MCF 10A (cell line): ENCODE measurements at regions of chrX and their contacts with region 1.

Region 1: DNA sequence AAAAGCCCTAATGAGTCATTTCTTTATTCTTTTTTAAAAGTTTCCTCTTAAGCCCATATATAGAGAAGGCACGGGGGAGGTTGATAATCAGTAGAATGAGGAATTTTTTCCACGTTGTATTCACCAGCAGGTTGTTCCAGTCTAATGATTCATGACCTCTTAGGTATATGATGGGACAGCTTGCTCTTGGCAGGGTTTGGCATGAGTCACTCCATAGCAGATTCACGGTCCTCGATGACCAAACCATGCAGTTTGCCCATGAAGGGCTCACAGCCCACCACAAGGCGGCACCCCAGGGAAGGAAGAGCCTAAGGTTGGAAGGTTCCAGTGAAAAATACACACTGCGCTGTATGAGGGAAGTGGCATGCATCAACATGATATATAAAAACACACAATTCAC is 623.8 kb upstream of the DIPK2B start:
- DNase-seq: peak; percentile 95
- H3K4me3 Mint-ChIP-seq: no peak overlapping the region
- H3K27ac Mint-ChIP-seq: peak overlapping the region; percentile 55
- H3K4me1 Mint-ChIP-seq: peaks cover 13% of the 10 kb centered on the region
- H3K27me3 Mint-ChIP-seq: peaks cover 8% of the 10 kb centered on the region
- CTCF ChIP-seq: peak; percentile 65

Region 2: DNA sequence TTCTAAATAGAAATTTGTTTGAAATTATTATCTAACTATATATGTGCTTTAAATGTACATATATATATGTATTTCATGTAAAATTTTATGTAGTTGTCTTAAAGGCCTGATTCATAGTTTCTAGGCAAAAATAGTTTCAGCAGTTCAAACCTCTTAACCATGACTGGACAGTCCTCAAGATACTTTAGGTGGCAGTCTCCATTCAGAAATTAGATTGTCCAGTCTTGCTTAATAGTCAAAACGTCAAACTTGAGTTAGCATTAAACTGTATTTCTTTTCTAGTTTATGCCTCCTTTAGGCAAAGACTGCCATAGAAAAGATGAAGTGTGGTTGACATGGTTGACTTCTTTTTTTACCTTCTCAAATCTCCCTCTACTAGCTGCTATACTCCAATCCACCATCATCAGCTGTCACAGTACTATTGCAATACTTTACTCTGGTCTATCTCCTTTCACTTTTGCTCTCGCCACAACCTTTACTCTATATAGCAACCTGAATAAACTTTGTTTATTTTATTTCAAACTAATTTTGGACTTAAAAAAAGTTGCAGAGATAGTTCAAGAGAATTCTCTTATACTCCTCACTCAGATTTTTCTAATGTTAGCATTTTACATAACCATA is 228.2 kb before region 1 on chrX:
- CTCF ChIA-PET with region 1: no interaction called
- POLR2A ChIA-PET with region 1: no interaction called
- intact Hi-C with region 1: loop called (anchors 10 kb)
- DNase-seq: peak; percentile 9
- H3K4me3 Mint-ChIP-seq: no peak overlapping the region
- H3K27ac Mint-ChIP-seq: no peak overlapping the region
- H3K4me1 Mint-ChIP-seq: no peaks in the 10 kb centered on the region
- H3K27me3 Mint-ChIP-seq: peaks cover 76% of the 10 kb centered on the region
- CTCF ChIP-seq: no peak

Region 3: DNA sequence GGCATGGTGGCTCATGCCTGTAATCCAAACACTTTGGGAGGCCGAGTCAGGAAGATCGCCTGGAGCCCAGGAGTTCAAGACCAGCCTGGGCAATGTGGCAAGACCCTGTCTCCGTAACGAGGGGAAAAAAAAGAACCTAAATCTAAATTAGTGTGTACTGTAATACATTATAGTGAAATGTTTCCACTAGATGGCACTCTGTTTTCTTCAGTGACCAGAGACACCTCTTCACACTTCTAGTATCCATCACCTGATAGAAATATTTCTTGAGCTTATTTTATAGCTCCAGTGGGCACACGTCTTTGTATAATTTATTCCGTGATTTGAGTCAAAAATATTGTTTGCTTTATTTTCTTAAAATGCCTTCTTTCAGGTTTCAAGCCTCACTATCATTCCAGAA is 22.9 kb before region 1 on chrX:
- CTCF ChIA-PET with region 1: interaction called, 10 read pairs
- POLR2A ChIA-PET with region 1: interaction called, 16 read pairs
- intact Hi-C with region 1: loop called (anchors 1 kb)
- DNase-seq: peak; percentile 66
- H3K4me3 Mint-ChIP-seq: peak overlapping the region; percentile 47
- H3K27ac Mint-ChIP-seq: peak overlapping the region; percentile 67
- H3K4me1 Mint-ChIP-seq: peaks cover 24% of the 10 kb centered on the region
- H3K27me3 Mint-ChIP-seq: peaks cover 49% of the 10 kb centered on the region
- CTCF ChIP-seq: peak; percentile 46

Region 4: DNA sequence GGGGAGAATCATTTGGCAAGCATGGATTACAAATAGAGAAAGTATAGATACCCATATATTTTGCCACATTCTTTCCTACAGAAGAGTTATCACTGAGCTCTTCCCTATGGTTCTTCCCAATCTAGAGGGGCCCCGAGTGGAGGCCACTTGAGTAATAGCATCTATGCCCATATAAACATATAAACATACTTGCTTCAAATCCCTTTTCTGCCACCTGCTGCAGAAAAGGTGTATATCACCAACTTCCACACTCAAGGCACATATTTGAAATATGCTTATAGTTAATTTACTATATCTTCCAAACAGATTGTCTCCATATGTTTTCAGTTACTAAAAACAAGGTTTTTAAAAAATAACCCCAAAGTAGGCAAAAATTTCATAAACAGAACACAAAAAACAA is 19.0 kb after region 1 on chrX:
- CTCF ChIA-PET with region 1: interaction called, 4 read pairs
- POLR2A ChIA-PET with region 1: interaction called, 7 read pairs
- intact Hi-C with region 1: loop called (anchors 1 kb)
- DNase-seq: peak; percentile 46
- H3K4me3 Mint-ChIP-seq: no peak overlapping the region
- H3K27ac Mint-ChIP-seq: no peak overlapping the region
- H3K4me1 Mint-ChIP-seq: peaks cover 14% of the 10 kb centered on the region
- H3K27me3 Mint-ChIP-seq: peaks cover 20% of the 10 kb centered on the region
- CTCF ChIP-seq: peak; percentile 23

Region 5: DNA sequence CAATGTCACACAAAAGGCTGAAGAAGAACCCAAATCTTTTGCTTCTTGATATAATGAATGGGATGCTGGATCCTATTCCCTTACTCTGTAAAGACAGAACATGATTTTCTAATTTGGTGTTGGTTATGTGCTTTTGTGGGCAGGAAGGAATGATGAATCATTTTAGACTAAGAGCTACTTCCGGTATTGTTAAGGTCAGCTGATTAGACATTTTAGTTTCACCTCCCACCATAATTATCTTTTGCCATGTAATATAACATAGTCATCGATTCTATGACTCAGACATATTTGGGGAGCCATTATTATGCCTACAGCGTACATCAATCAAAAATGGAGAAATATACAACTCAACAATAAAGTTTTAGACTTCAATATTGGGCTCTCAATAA is 455.4 kb after region 1 on chrX:
- CTCF ChIA-PET with region 1: no interaction called
- POLR2A ChIA-PET with region 1: no interaction called
- intact Hi-C with region 1: loop called (anchors 1 kb)
- DNase-seq: no peak
- H3K4me3 Mint-ChIP-seq: no peak overlapping the region
- H3K27ac Mint-ChIP-seq: no peak overlapping the region
- H3K4me1 Mint-ChIP-seq: peaks cover 6% of the 10 kb centered on the region
- H3K27me3 Mint-ChIP-seq: no peaks in the 10 kb centered on the region
- CTCF ChIP-seq: no peak

Region 6: DNA sequence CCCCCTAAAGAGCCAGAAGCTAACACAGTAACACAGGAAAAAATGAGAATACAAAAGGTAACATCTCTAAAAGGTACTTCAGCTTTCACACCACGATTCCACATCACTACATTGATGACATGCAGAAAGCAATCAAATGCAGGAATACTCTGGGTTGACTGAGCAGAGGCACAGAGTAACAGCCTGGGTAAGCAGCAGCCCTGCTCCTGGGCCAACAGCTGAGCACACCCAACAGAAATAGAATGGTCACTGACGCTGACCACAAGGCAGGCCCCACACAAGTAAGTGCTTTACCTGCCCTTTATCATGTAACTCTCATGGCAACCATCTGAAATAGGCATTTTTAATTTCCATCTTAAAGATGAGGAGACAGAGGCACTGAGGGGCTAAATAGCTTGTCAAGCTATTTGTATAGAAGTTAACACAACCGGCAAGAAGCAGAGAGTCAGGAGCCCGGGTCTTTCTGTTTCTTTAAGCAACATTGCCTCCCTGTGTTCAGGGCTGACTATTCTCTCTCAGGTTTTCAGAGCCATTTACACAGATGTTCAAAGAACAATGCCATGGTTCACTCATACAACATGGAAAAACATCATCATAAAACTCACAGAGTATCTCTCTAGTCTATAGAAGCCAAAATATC is 551.9 kb after region 1 on chrX:
- CTCF ChIA-PET with region 1: interaction called, 3 read pairs
- POLR2A ChIA-PET with region 1: interaction called, 3 read pairs
- intact Hi-C with region 1: loop called (anchors 1 kb)
- DNase-seq: peak; percentile 55
- H3K4me3 Mint-ChIP-seq: no peak overlapping the region
- H3K27ac Mint-ChIP-seq: no peak overlapping the region
- H3K4me1 Mint-ChIP-seq: no peaks in the 10 kb centered on the region
- H3K27me3 Mint-ChIP-seq: peaks cover 77% of the 10 kb centered on the region
- CTCF ChIP-seq: peak; percentile 44